ENCODE measurements at regions of chr1 and their contacts with region 1.

Region 1: GRCh38 chr1:62746085-62746808 is 37.7 kb upstream of the ATG4C start:
- DNase-seq: peak; percentile 60
- ATAC-seq: no peak
- H3K4me3 ChIP-seq: no peak overlapping the region
- H3K4me3 Mint-ChIP-seq: no peak overlapping the region
- H3K27ac ChIP-seq: no peak overlapping the region
- H3K27ac Mint-ChIP-seq: no peak overlapping the region
- H3K4me1 ChIP-seq: no peaks in the 10 kb centered on the region
- H3K4me1 Mint-ChIP-seq: no peaks in the 10 kb centered on the region
- H3K27me3 ChIP-seq: no peaks in the 10 kb centered on the region
- H3K27me3 Mint-ChIP-seq: no peaks in the 10 kb centered on the region
- CTCF ChIP-seq: peak; percentile 78

Region 2: GRCh38 chr1:62082456-62083363 is 663.5 kb before region 1 on chr1:
- CTCF ChIA-PET with region 1: interaction called, 33 read pairs
- POLR2A ChIA-PET with region 1: no interaction called
- intact Hi-C with region 1: no loop called
- DNase-seq: peak; percentile 38
- ATAC-seq: peak; percentile 45
- H3K4me3 ChIP-seq: no peak overlapping the region
- H3K4me3 Mint-ChIP-seq: no peak overlapping the region
- H3K27ac ChIP-seq: no peak overlapping the region
- H3K27ac Mint-ChIP-seq: no peak overlapping the region
- H3K4me1 ChIP-seq: no peaks in the 10 kb centered on the region
- H3K4me1 Mint-ChIP-seq: no peaks in the 10 kb centered on the region
- H3K27me3 ChIP-seq: no peaks in the 10 kb centered on the region
- H3K27me3 Mint-ChIP-seq: no peaks in the 10 kb centered on the region
- CTCF ChIP-seq: peak; percentile 95

Region 3: GRCh38 chr1:62103880-62104279 is 642.4 kb before region 1 on chr1:
- CTCF ChIA-PET with region 1: no interaction called
- POLR2A ChIA-PET with region 1: no interaction called
- intact Hi-C with region 1: no loop called
- DNase-seq: no peak
- ATAC-seq: no peak
- H3K4me3 ChIP-seq: no peak overlapping the region
- H3K4me3 Mint-ChIP-seq: no peak overlapping the region
- H3K27ac ChIP-seq: no peak overlapping the region
- H3K27ac Mint-ChIP-seq: no peak overlapping the region
- H3K4me1 ChIP-seq: no peaks in the 10 kb centered on the region
- H3K4me1 Mint-ChIP-seq: no peaks in the 10 kb centered on the region
- H3K27me3 ChIP-seq: no peaks in the 10 kb centered on the region
- H3K27me3 Mint-ChIP-seq: no peaks in the 10 kb centered on the region
- CTCF ChIP-seq: no peak

Region 4: GRCh38 chr1:62391369-62391971 is 354.8 kb before region 1 on chr1:
- CTCF ChIA-PET with region 1: interaction called, 10 read pairs
- POLR2A ChIA-PET with region 1: no interaction called
- intact Hi-C with region 1: no loop called
- DNase-seq: peak; percentile 38
- ATAC-seq: no peak
- H3K4me3 ChIP-seq: no peak overlapping the region
- H3K4me3 Mint-ChIP-seq: no peak overlapping the region
- H3K27ac ChIP-seq: no peak overlapping the region
- H3K27ac Mint-ChIP-seq: no peak overlapping the region
- H3K4me1 ChIP-seq: no peaks in the 10 kb centered on the region
- H3K4me1 Mint-ChIP-seq: no peaks in the 10 kb centered on the region
- H3K27me3 ChIP-seq: no peaks in the 10 kb centered on the region
- H3K27me3 Mint-ChIP-seq: peaks cover 5% of the 10 kb centered on the region
- CTCF ChIP-seq: peak; percentile 65

Region 5: GRCh38 chr1:62508187-62508758 is 238.0 kb before region 1 on chr1:
- CTCF ChIA-PET with region 1: interaction called, 153 read pairs
- POLR2A ChIA-PET with region 1: no interaction called
- intact Hi-C with region 1: loop called (anchors 1 kb)
- DNase-seq: peak; percentile 50
- ATAC-seq: no peak
- H3K4me3 ChIP-seq: no peak overlapping the region
- H3K4me3 Mint-ChIP-seq: no peak overlapping the region
- H3K27ac ChIP-seq: no peak overlapping the region
- H3K27ac Mint-ChIP-seq: no peak overlapping the region
- H3K4me1 ChIP-seq: no peaks in the 10 kb centered on the region
- H3K4me1 Mint-ChIP-seq: no peaks in the 10 kb centered on the region
- H3K27me3 ChIP-seq: no peaks in the 10 kb centered on the region
- H3K27me3 Mint-ChIP-seq: no peaks in the 10 kb centered on the region
- CTCF ChIP-seq: peak; percentile 70

Region 6: GRCh38 chr1:62716397-62716796 is 29.9 kb before region 1 on chr1:
- CTCF ChIA-PET with region 1: no interaction called
- POLR2A ChIA-PET with region 1: no interaction called
- intact Hi-C with region 1: no loop called
- DNase-seq: no peak
- ATAC-seq: no peak
- H3K4me3 ChIP-seq: no peak overlapping the region
- H3K4me3 Mint-ChIP-seq: no peak overlapping the region
- H3K27ac ChIP-seq: no peak overlapping the region
- H3K27ac Mint-ChIP-seq: no peak overlapping the region
- H3K4me1 ChIP-seq: no peaks in the 10 kb centered on the region
- H3K4me1 Mint-ChIP-seq: no peaks in the 10 kb centered on the region
- H3K27me3 ChIP-seq: no peaks in the 10 kb centered on the region
- H3K27me3 Mint-ChIP-seq: peaks cover 4% of the 10 kb centered on the region
- CTCF ChIP-seq: no peak

Region 7: GRCh38 chr1:62735491-62736171 is 10.6 kb before region 1 on chr1:
- CTCF ChIA-PET with region 1: interaction called, 19 read pairs
- POLR2A ChIA-PET with region 1: no interaction called
- intact Hi-C with region 1: no loop called
- DNase-seq: no peak
- ATAC-seq: no peak
- H3K4me3 ChIP-seq: no peak overlapping the region
- H3K4me3 Mint-ChIP-seq: no peak overlapping the region
- H3K27ac ChIP-seq: no peak overlapping the region
- H3K27ac Mint-ChIP-seq: no peak overlapping the region
- H3K4me1 ChIP-seq: no peaks in the 10 kb centered on the region
- H3K4me1 Mint-ChIP-seq: peaks cover under 1% of the 10 kb centered on the region
- H3K27me3 ChIP-seq: no peaks in the 10 kb centered on the region
- H3K27me3 Mint-ChIP-seq: peaks cover 3% of the 10 kb centered on the region
- CTCF ChIP-seq: no peak

Measured in B cell (primary cell).